ENCODE measurements at regions of chr4 and their contacts with region 1.

Region 1: DNA sequence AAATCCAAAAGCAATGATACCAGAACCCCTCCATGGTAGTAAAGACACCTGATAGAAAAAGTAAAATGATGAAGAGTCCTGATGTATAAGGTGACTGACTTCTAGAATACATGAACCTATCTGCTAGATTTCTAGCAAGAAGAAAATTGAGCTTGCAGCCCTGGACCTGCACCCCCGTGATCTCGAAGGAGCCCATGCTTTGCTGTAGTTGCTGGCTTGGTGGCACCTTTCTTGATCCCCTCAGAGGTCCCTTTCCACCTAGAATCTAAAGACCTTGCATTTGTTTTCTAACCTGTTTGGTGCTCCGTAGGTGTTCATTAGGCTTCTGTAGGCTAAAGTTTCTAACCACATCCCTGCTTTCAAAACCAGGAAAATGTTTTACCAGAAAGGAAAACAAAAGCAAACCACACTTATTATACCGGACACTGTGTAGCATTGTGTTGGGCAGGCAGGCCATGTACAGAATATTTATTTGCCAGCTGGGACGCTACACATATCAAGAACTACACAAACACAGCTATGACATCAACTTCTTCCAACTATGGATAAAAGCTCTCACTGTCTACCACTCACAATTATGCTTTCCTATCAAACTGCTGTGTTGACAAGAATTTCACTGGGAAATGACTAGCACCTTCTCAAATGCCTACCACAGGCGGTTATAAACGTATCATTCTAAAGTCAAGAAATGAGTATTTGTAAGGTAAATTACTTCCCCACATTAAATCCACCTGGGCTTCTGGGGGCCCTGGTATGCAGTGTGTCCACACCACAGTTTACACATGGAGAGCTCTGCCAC is 316.2 kb downstream of the UNC5C start:
- DNase-seq: no peak
- ATAC-seq: no peak
- H3K4me3 ChIP-seq: no peak overlapping the region
- H3K4me3 Mint-ChIP-seq: no peak overlapping the region
- H3K27ac ChIP-seq: no peak overlapping the region
- H3K27ac Mint-ChIP-seq: no peak overlapping the region
- H3K4me1 ChIP-seq: no peaks in the 10 kb centered on the region
- H3K4me1 Mint-ChIP-seq: no peaks in the 10 kb centered on the region
- H3K27me3 ChIP-seq: no peaks in the 10 kb centered on the region
- H3K27me3 Mint-ChIP-seq: no peaks in the 10 kb centered on the region
- CTCF ChIP-seq: no peak

Region 2: DNA sequence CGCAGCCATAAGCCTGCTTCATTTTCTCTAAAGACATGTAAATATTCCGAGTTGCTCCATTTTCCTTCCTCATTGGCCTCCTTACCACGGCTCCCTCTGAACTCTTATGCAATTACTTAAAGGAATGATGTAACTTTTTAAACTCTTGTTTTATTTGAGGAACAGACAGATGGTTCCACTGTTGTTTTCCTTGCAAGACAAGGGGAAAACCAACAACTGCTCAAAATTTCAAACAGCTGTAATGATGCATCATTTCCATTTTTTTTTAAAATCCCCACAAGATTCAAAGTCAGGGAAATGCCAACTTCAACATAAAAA is 16.3 kb before region 1 on chr4:
- CTCF ChIA-PET with region 1: no interaction called
- POLR2A ChIA-PET with region 1: no interaction called
- intact Hi-C with region 1: loop called in 1 of 2 experiments (anchors 1 kb)
- DNase-seq: no peak
- ATAC-seq: no peak
- H3K4me3 ChIP-seq: no peak overlapping the region
- H3K4me3 Mint-ChIP-seq: no peak overlapping the region
- H3K27ac ChIP-seq: no peak overlapping the region
- H3K27ac Mint-ChIP-seq: no peak overlapping the region
- H3K4me1 ChIP-seq: no peaks in the 10 kb centered on the region
- H3K4me1 Mint-ChIP-seq: no peaks in the 10 kb centered on the region
- H3K27me3 ChIP-seq: no peaks in the 10 kb centered on the region
- H3K27me3 Mint-ChIP-seq: no peaks in the 10 kb centered on the region
- CTCF ChIP-seq: no peak

Region 3: GRCh38 chr4:95272797-95273196 is 40.2 kb after region 1 on chr4:
- CTCF ChIA-PET with region 1: no interaction called
- POLR2A ChIA-PET with region 1: no interaction called
- intact Hi-C with region 1: no loop called
- DNase-seq: no peak
- ATAC-seq: no peak
- H3K4me3 ChIP-seq: no peak overlapping the region
- H3K4me3 Mint-ChIP-seq: no peak overlapping the region
- H3K27ac ChIP-seq: no peak overlapping the region
- H3K27ac Mint-ChIP-seq: no peak overlapping the region
- H3K4me1 ChIP-seq: no peaks in the 10 kb centered on the region
- H3K4me1 Mint-ChIP-seq: no peaks in the 10 kb centered on the region
- H3K27me3 ChIP-seq: no peaks in the 10 kb centered on the region
- H3K27me3 Mint-ChIP-seq: no peaks in the 10 kb centered on the region
- CTCF ChIP-seq: no peak

Region 4: DNA sequence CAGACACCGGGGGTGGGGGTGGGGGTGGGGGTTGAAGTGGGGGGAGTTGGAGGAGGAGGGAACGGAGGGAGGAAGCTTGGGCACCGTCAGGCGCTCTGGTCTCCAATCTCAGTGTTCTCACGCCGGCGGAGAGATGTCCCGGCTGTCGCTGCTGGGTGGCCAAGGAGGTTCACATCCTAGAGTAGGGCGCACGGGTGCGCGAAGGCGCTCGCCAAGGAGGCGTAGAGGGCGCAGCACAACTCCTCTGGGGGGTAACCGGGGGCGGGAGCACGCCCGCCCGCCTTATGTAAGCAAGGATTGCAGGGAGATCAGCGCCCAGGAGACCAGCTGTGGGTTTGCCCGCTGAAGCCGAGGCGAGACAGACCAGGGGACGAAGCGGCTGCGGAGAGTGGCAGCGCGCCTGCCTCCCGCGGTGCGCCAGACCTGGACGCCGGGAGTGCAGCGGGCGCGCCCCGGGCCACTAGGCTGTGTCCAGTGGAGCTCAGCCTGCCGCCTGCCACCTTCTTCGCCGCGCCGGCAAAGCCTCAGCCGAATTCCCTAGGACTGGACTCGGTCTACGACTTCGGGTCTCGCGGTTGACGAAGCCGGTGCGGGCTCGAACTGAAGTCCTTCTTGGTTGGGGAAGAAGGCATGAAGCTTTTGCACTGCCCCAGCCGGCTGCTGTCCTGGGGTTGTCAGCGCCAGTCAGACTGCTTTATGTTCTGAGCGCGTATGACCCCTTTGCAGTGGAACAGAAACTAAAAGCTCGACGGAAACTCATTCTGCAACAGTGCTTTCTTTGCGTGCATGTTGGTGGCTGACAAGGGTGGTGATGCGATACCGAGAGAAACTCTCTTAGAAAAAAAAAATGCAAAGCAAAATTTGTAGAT is 316.9 kb after region 1 on chr4:
- CTCF ChIA-PET with region 1: no interaction called
- POLR2A ChIA-PET with region 1: no interaction called
- intact Hi-C with region 1: no loop called
- DNase-seq: peak in 1 of 9 experiments; percentile 6
- ATAC-seq: no peak
- H3K4me3 ChIP-seq: peak overlapping the region; percentile 32 to 37
- H3K4me3 Mint-ChIP-seq: peak overlapping the region; percentile 62
- H3K27ac ChIP-seq: no peak overlapping the region
- H3K27ac Mint-ChIP-seq: no peak overlapping the region
- H3K4me1 ChIP-seq: no peaks in the 10 kb centered on the region
- H3K4me1 Mint-ChIP-seq: peaks cover 13% of the 10 kb centered on the region
- H3K27me3 ChIP-seq: peaks cover 6 to 8% of the 10 kb centered on the region in 2 experiments
- H3K27me3 Mint-ChIP-seq: peaks cover 40% of the 10 kb centered on the region
- CTCF ChIP-seq: no peak